ENCODE measurements at regions of chr2 and their contacts with region 1.

Region 1: DNA sequence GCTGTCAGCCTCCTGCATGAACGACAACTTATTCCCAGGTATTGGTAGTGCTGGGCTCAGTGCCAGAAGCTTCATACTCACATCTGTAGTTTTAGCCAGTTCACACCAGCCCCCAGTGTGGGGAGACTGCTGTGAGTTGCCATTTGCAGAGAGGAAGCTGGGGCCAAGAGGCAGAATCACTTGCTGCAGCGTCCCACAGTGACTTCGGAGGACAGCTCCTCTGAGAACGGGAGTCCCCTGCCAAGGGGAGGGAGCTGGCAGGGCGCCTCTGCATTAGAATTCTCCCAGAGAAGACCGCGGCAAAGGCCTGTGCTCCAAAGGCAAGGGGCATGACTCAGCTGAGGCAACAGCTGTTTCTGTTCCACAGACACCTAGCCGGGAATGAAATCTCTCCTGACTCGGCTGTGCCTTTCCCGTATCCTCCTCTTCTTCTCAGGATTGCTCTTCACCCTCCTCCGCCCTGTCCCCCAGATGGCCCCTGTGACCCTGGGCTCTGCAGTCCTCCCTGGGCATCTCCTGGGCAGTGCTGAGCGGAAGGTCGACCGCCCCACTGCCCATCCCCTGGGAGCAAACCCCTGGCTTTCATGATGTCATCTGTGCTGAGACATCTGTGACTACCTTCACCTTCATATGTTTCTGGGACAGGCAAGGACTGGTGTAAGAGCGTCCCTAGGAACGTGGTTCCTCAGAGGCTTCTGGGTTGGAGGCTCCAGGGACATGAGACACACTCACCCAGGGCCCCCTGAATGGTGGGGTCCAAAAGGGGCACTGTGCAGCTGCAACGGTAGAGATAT is 18.0 kb downstream of the MAL start:
- DNase-seq: peak in 1 of 2 donors; percentile 51
- H3K4me3 ChIP-seq: no peak overlapping the region
- CTCF ChIP-seq: no peak
- POLR2A ChIP-seq: no peak

Region 2: GRCh38 chr2:94923196-94923595 is 120.3 kb before region 1 on chr2:
- intact Hi-C with region 1: no loop called
- DNase-seq: no peak
- H3K4me3 ChIP-seq: no peak overlapping the region
- CTCF ChIP-seq: no peak
- POLR2A ChIP-seq: no peak

Region 3: DNA sequence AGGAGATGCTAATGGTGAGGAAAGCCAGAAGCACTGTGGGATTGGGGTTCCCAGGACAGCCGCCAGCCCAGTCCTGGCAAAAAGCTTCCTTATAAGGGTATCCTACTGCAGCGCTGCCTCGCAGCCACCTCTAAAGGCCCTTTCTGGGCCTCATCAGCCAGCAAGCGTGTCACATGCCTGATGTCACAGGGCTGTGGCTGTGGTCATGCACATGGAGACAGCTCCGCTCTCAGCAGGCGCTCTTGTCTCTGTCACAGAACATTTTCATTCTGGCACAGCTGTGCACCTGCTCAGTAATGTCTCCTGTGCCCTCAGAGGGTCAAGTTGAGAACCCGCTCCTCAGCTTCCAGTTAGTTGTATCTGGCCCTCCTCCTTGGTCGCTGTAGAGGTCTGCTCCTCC is 35.7 kb before region 1 on chr2:
- intact Hi-C with region 1: no loop called
- DNase-seq: no peak
- H3K4me3 ChIP-seq: no peak overlapping the region
- CTCF ChIP-seq: no peak
- POLR2A ChIP-seq: no peak

Region 4: GRCh38 chr2:95392730-95393455 is 349.4 kb after region 1 on chr2:
- intact Hi-C with region 1: no loop called
- DNase-seq: no peak
- H3K4me3 ChIP-seq: no peak overlapping the region
- CTCF ChIP-seq: no peak
- POLR2A ChIP-seq: no peak

Region 5: DNA sequence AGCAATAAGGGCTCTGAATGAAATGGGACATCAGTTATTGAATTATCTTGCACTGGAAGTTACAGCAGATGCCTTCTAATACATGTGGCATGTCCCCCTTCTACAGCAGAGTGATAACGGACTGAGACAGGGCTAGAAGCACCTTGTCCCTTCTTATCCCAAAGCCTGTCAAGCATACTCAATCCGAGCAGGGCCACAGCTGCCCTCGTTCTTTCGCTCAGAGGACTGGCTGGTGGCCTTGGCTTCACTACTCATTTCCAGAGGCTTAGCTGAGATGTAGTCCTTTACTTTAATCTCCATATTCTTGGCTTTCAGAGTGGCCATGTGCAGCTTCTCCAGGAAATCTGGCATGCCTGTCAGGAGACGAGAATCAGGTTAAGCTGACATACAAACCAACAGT is 1143.1 kb after region 1 on chr2:
- intact Hi-C with region 1: loop called (anchors 5 kb)
- DNase-seq: no peak
- H3K4me3 ChIP-seq: no peak overlapping the region
- CTCF ChIP-seq: no peak
- POLR2A ChIP-seq: no peak